ENCODE measurements at regions of chr9 and their contacts with region 1.

Region 1: DNA sequence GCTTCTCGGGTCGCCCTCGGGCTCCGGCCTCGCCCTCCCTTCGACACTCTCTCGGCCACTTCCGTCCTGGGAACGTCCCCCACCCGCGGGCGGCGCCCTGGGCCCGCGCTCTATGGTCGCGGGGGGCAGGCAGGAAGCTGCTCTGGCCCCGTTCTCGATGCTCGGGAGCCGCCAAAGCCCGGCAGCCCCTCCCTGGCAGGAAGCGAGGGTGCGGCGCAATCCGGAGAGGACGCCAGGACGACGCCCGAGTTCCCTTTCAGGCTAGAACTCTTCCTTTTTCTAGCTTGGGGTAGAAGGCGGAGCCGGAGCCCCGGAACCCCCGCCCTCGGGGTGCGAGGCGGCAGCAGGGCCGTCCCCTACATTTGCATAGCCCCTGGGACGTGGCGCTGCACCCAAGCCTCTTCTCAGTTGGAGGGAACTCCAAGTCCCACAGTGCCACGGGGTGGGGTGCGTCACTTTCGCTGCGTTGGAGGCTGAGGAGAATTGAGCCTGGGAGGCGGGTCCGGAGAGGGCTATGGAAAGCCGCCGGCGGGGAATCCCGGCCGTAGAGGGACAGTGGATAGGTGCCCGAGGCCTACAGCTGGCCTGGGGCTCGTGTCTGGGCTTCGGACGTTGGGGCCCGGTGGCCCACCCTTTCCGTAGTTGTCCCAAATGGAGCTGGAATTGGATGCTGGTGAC is at the starts of genes CREB3 and TLN1:
- DNase-seq: peak; percentile 97
- CTCF ChIP-seq: peak; percentile 47

Region 2: DNA sequence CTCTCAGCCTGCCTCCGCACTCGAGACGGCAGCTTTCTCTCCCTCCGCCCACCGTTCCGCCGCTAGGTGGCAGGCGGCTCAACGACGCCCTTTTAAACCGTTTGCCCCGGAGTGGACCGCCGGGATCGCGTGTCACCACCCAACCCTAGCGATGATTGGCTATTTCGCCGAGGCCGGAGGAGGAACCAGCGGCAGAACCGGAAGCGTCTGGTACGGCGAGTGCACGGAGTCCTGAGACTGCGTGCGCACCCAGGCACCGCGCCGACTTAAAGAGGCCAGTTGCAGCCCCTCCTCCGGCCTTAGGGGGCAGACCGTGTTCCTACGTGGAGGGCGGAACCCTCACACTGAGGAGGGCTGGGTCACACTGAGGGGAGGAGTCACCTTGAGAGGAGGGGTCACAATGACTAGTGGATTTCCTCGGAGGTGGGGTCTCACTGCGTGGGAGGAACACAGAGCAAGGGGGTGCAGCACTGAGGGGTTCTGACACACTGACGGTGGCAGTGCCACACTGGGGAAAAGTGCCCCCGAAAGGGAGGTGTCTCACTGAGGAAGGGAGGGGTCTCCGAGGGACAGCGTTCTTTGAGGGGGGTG is 128.2 kb before region 1 on chr9:
- CTCF ChIA-PET with region 1: interaction called, 16 read pairs
- POLR2A ChIA-PET with region 1: interaction called, 4 read pairs
- DNase-seq: peak; percentile 98
- CTCF ChIP-seq: peak; percentile 97

Region 3: GRCh38 chr9:35657546-35658136 is 74.6 kb before region 1 on chr9 and contains the start of gene RMRP:
- CTCF ChIA-PET with region 1: interaction called, 21 read pairs
- POLR2A ChIA-PET with region 1: interaction called, 3 read pairs
- DNase-seq: peak; percentile 92
- CTCF ChIP-seq: no peak

Region 4: GRCh38 chr9:35696525-35697215 is 35.6 kb before region 1 on chr9:
- CTCF ChIA-PET with region 1: interaction called, 130 read pairs
- POLR2A ChIA-PET with region 1: interaction called, 4 read pairs
- DNase-seq: peak; percentile 85
- CTCF ChIP-seq: peak; percentile 94

Region 5: GRCh38 chr9:35748858-35749514 is 16.7 kb after region 1 on chr9 and contains the starts of genes GBA2 and RGP1:
- CTCF ChIA-PET with region 1: interaction called, 134 read pairs
- POLR2A ChIA-PET with region 1: interaction called, 20 read pairs
- DNase-seq: peak; percentile 87
- CTCF ChIP-seq: no peak

Region 6: GRCh38 chr9:37187713-37188439 is 1455.6 kb after region 1 on chr9:
- CTCF ChIA-PET with region 1: no interaction called
- POLR2A ChIA-PET with region 1: no interaction called
- DNase-seq: peak; percentile 60
- CTCF ChIP-seq: no peak